RWPE1 (cell line): ENCODE measurements at regions of chr19 and their contacts with region 1.

Region 1: DNA sequence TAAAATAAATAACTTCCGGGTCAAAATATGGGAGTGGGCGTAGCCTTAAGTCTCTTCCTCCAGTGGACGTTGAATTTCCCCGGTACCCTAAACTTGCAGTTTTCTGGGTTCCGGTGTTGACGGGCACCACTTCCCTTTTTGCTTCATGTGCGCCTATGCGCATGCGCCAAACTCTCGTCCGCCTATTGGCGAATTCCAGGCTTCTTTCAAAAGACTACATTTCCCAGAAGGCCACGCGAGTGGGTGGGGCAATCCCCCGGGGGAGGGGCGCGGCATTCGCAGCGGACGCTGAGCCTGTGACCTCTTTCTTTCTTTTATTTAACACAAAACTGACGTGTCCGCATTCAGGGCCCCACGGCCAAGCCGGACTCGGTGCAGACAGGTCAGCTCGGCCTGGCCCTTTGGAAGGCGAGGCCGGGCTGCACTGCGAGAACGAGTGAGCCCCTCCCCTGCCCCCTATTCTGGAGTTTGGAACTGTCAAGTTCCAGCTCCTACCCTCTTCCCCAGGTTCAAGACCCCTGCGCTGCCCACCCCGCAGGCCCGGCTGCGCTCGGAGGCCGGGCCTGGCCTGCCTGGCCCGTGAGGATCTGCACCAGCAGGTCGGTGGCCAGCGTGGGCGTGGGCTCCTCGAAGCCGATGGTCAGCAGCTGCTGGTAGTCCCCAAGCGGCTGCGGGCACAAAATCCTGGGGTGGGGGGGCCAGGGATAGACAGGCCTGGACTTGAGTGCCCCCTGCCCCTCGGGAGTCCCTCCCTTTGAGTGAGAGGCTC is 4.1 kb downstream of the C19orf67 start:
- DNase-seq: peak; percentile 98
- H3K27ac ChIP-seq: peak overlapping the region; percentile 85
- CTCF ChIP-seq: no peak

Region 2: GRCh38 chr19:14136509-14137281 is 55.2 kb after region 1 on chr19 and contains the start of gene ASF1B:
- CTCF ChIA-PET with region 1: interaction called, 10 read pairs
- POLR2A ChIA-PET with region 1: no interaction called
- DNase-seq: peak; percentile 99
- H3K27ac ChIP-seq: peak within 1 kb of the TSS; percentile 96
- CTCF ChIP-seq: peak; percentile 99

Region 3: DNA sequence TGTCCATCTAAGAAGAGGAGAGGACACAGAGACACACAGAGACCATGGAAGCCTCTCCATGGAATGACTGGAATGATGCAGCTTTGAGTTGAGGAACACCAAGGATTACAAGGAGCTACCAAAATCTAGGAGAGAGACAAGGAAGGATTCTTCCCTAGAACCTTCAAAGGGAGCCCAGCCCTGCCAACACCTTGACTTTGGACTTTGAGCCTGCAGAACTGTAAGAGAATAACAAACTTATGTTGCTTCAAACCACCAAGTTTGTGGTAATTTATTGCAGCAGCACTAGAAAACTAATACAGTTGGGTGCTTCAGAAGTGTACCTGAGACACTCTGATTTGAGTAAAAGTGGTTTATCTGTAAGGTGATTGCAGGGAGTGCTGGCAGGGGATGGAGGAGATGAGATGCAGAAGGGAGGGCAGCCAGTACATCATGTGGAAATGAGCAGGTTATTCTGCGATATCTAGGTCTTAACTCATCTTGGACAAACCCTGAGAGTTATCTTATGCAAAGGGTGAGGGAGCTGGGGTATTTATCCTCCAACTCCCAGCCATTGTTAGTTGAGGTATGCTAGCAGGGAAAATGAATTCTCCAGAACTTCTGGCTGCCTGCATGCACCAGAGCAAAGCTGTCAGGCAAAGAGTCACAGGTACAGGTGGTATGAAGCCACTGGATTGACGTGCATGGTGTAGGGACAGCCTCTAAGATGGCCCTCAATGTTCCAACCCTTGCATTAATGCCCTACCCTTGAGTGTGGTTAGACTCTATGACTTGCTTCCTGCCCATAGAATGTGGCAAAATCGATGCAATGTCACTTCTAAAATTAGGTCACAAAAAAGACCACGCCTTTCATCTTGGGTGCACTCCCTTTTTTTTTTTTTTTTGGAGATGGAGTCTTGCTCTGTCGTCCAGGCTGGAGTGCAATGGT is 155.8 kb after region 1 on chr19:
- CTCF ChIA-PET with region 1: no interaction called
- POLR2A ChIA-PET with region 1: no interaction called
- DNase-seq: no peak
- H3K27ac ChIP-seq: no peak overlapping the region
- CTCF ChIP-seq: no peak